ENCODE measurements at regions of chr15 and their contacts with region 1.

Region 1: GRCh38 chr15:91049378-91050127 is 27.2 kb upstream of the VPS33B start:
- DNase-seq: peak in 1 of 3 donors; percentile 62
- ATAC-seq: peak; percentile 97 to 99 (median 98)
- H3K4me3 ChIP-seq: no peak overlapping the region
- H3K27ac ChIP-seq: no peak overlapping the region
- H3K4me1 ChIP-seq: no peaks in the 10 kb centered on the region
- H3K27me3 ChIP-seq: no peaks in the 10 kb centered on the region
- CTCF ChIP-seq: peak; percentile 53 to 69 (median 57)
- POLR2A ChIP-seq: no peak

Region 2: GRCh38 chr15:90869601-90870353 is 179.8 kb before region 1 on chr15:
- intact Hi-C with region 1: no loop called
- DNase-seq: peak in 2 of 3 donors; percentile 71
- ATAC-seq: peak; percentile 10 to 57 (median 36)
- H3K4me3 ChIP-seq: peak overlapping the region in 2 of 3 donors; percentile 81 to 82
- H3K27ac ChIP-seq: peak overlapping the region; percentile 93 to 98 (median 97)
- H3K4me1 ChIP-seq: peaks cover 0 to 45% (median 9%) of the 10 kb centered on the region in 4 donors
- H3K27me3 ChIP-seq: no peaks in the 10 kb centered on the region
- CTCF ChIP-seq: no peak
- POLR2A ChIP-seq: peak; percentile 22

Region 3: GRCh38 chr15:91268510-91268909 is 219.0 kb after region 1 on chr15:
- intact Hi-C with region 1: loop called in 1 of 2 experiments (anchors 10 kb)
- DNase-seq: no peak
- ATAC-seq: no peak
- H3K4me3 ChIP-seq: no peak overlapping the region
- H3K27ac ChIP-seq: no peak overlapping the region
- H3K4me1 ChIP-seq: peaks cover 0 to 5% (median 0%) of the 10 kb centered on the region in 4 donors
- H3K27me3 ChIP-seq: no peaks in the 10 kb centered on the region
- CTCF ChIP-seq: no peak
- POLR2A ChIP-seq: no peak

Measured in right lobe of liver (tissue), 6 donors.